K562 (cell line): ENCODE measurements at regions of chr10 and their contacts with region 1.

Region 1: GRCh38 chr10:71396084-71396720 is 518 bp upstream of the CDH23 start:
- DNase-seq: peak; percentile 57 to 63 (median 59)
- ATAC-seq: peak; percentile 92
- H3K4me3 ChIP-seq: no peak overlapping the region
- H3K27ac ChIP-seq: no peak overlapping the region
- H3K4me1 ChIP-seq: peaks cover 0 to 20% of the 10 kb centered on the region in 2 experiments; a peak in 2 of 5 replicates
- H3K27me3 ChIP-seq: peaks cover 64 to 91% of the 10 kb centered on the region in 2 experiments
- CTCF ChIP-seq: peak; percentile 62 to 73 (median 71)
- EP300 ChIP-seq: no peak
- POLR2A ChIP-seq: no peak
- RAD21 ChIP-seq: peak; percentile 61 to 80

Region 2: GRCh38 chr10:71473671-71474599 is 77.7 kb after region 1 on chr10:
- CTCF ChIA-PET with region 1: no interaction called
- POLR2A ChIA-PET with region 1: no interaction called
- in situ Hi-C with region 1: no loop called
- intact Hi-C with region 1: loop called (anchors 5 kb)
- DNase-seq: no peak
- ATAC-seq: no peak
- H3K4me3 ChIP-seq: no peak overlapping the region
- H3K27ac ChIP-seq: no peak overlapping the region
- H3K4me1 ChIP-seq: peaks cover 0 to 7% of the 10 kb centered on the region in 2 experiments; a peak in 3 of 5 replicates
- H3K27me3 ChIP-seq: peaks cover 16 to 66% of the 10 kb centered on the region in 2 experiments
- CTCF ChIP-seq: no peak
- EP300 ChIP-seq: no peak
- POLR2A ChIP-seq: no peak
- RAD21 ChIP-seq: no peak